Right lobe of liver (tissue), 6 donors: ENCODE measurements at regions of chr1 and their contacts with region 1.

Region 1: DNA sequence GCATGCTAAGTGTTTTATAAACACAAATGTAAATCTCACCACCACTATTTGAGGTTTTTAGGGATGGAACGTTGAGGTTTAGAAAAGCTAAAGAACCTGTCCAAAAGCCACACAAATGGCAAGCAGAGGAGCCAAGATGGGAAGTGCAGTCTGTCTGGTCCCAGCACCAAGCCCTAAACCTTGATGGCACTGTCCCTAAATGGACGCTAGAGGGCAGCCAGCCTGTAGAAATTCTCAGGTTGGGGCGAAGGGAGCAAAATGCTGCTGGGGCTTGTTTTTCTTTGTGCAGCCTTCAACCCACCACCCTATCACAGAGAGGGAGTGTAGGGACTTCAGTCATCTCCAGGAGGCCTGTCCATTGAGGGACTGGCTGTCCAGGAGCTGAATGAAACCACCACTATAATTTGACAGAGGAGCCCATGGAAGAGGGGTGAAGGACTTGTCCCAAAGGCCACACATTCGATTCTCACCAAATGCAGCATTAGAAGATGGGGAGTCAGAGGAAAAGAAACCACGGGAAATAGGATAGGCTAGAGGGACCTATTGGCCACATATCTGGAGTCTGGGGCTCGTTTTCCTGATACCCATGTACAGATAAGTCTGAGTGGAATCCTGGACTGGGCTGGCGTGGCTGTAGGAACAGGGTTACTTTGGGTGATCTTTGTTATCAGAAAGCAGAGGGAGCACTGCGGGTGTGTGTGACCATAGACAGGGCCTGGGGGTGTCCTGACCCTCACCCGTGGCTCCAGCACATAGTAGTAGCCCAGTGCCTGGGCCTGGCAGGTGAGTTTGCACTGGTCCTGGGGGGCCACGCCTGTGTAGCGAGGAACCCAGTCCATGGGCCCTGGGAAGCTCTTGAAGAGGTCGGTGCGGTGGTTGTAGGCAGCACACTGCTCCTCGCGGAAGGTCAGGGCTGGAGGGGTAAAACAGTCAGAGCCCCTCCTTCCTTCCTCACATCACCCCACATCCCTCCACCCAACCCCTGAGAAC is 6.1 kb downstream of the ADAMTS4 start:
- DNase-seq: peak; percentile 50 to 78 (median 59)
- ATAC-seq: peak; percentile 64 to 71 (median 66)
- H3K4me3 ChIP-seq: peak overlapping the region in 2 of 3 donors; percentile 15 to 33
- H3K27ac ChIP-seq: peak overlapping the region in 2 of 3 donors; percentile 33 to 55
- H3K4me1 ChIP-seq: peaks cover 0 to 19% (median 13%) of the 10 kb centered on the region in 4 donors
- H3K27me3 ChIP-seq: no peaks in the 10 kb centered on the region
- CTCF ChIP-seq: peak; percentile 73 to 95 (median 88)
- POLR2A ChIP-seq: no peak

Region 2: DNA sequence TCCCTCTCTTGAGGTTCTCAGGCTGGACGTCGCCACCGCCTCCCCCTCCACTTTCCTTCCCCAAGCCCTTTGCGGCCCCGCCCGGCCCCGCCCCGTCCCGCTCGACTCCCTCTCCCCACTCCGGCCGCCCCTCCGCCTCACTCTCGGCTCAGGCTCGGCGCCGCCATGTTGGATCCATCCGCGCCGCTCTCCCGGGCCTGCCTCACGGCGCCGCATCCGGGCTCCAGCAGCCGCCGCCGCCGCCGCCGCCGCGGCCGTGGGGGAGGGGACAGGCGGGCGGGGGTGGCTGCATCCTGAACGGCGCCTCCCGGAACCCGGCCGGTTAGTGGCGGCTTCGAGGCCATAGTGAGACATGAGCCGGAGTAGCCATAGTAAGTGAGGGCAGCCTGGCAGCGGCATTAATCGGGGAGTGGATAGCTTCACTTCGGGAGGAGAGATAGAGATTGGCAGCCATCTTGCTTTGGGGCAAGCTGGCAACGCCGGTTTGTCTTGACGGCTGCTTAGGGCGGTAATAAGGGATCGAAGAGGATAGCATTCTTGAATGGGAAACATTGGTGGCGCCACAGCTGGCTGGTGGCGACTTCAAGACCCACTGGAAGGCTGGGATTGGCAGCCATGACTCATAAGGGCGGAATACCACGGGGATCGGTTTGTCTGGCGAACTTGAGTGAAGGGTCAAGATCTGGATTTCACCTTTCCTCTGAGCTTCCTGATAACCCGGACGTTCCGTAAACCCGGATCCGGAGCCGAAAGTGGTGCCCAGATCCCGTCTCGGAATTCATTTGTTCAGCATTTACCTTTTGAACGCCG is 60.2 kb before region 1 on chr1 and contains the start of gene DEDD:
- intact Hi-C with region 1: no loop called
- DNase-seq: peak; percentile 93 to 95 (median 94)
- ATAC-seq: peak; percentile 91 to 97 (median 92)
- H3K4me3 ChIP-seq: peak within 1 kb of the TSS; percentile 51 to 82 (median 73)
- H3K27ac ChIP-seq: peak within 1 kb of the TSS; percentile 81 to 94 (median 93)
- H3K4me1 ChIP-seq: peaks cover 0 to 15% (median 4%) of the 10 kb centered on the region in 4 donors
- H3K27me3 ChIP-seq: no peaks in the 10 kb centered on the region
- CTCF ChIP-seq: no peak
- POLR2A ChIP-seq: peak; percentile 69
- total RNA-seq, gene DEDD: 13.8 to 22.0 (median 16.6) TPM

Region 3: GRCh38 chr1:161374373-161374772 is 181.6 kb after region 1 on chr1:
- intact Hi-C with region 1: loop called in 1 of 2 experiments (anchors 10 kb)
- DNase-seq: no peak
- ATAC-seq: peak; percentile 25 to 73 (median 61)
- H3K4me3 ChIP-seq: no peak overlapping the region
- H3K27ac ChIP-seq: no peak overlapping the region
- H3K4me1 ChIP-seq: no peaks in the 10 kb centered on the region
- H3K27me3 ChIP-seq: no peaks in the 10 kb centered on the region
- CTCF ChIP-seq: peak; percentile 19 to 31 (median 24)
- POLR2A ChIP-seq: no peak

Region 4: GRCh38 chr1:161389691-161390558 is 197.2 kb after region 1 on chr1:
- intact Hi-C with region 1: loop called in 1 of 2 experiments (anchors 10 kb)
- DNase-seq: peak; percentile 98 to 99 (median 99)
- ATAC-seq: peak; percentile 86 to 95 (median 94)
- H3K4me3 ChIP-seq: peak overlapping the region; percentile 50 to 62 (median 57)
- H3K27ac ChIP-seq: peak overlapping the region; percentile 84 to 93 (median 86)
- H3K4me1 ChIP-seq: peaks cover 0 to 4% (median 0%) of the 10 kb centered on the region in 4 donors
- H3K27me3 ChIP-seq: no peaks in the 10 kb centered on the region
- CTCF ChIP-seq: no peak
- POLR2A ChIP-seq: peak; percentile 88

Region 5: DNA sequence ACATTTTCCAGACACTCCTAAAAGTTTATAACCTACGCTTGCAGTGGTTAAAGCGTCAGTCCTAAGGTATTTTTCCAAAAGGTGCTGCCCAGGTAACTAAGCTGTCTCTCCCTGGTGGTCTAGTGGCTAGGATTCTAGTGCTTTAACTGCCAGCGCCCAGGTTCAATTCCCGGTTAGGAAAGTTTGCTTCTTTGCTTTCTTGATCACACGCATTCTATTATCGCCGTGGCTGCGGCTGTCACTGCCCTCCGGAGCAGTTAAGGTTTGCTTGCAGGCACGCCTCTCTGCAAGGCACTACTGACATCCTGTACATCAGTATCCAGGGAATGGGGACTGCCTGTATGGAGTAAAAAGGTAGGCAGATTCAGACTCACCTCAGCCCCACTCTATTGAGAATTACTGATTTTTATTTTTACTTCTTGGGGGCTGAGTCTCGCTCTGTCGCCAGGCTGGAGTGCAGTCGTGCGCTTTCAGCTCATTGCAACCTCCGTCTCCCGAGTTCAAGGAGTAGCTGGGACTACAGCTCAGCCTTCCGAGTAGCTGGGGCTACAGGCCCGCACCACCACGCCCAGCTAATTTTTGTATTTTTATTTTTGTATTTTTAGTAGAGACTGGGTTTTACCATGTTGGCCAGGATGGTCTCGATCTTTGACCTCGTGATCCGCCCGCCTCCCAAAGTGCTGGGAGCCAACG is 228.1 kb after region 1 on chr1:
- intact Hi-C with region 1: no loop called
- DNase-seq: no peak
- ATAC-seq: no peak
- H3K4me3 ChIP-seq: no peak overlapping the region
- H3K27ac ChIP-seq: no peak overlapping the region
- H3K4me1 ChIP-seq: no peaks in the 10 kb centered on the region
- H3K27me3 ChIP-seq: no peaks in the 10 kb centered on the region
- CTCF ChIP-seq: no peak
- POLR2A ChIP-seq: no peak